Panc1 (cell line): ENCODE measurements at regions of chr22 and their contacts with region 1.

Region 1: GRCh38 chr22:40533712-40534378 is 102.7 kb downstream of the MRTFA start:
- DNase-seq: no peak
- ATAC-seq: peak; percentile 78
- H3K4me3 ChIP-seq: peak overlapping the region; percentile 33 to 45
- H3K27ac ChIP-seq: peak overlapping the region; percentile 94
- H3K4me1 ChIP-seq: peaks cover 43% of the 10 kb centered on the region
- H3K27me3 ChIP-seq: no peaks in the 10 kb centered on the region
- CTCF ChIP-seq: no peak

Region 2: GRCh38 chr22:40449676-40450035 is 84.2 kb before region 1 on chr22:
- CTCF ChIA-PET with region 1: interaction called, 11 read pairs
- POLR2A ChIA-PET with region 1: no interaction called
- in situ Hi-C with region 1: no loop called
- intact Hi-C with region 1: no loop called
- DNase-seq: no peak
- ATAC-seq: no peak
- H3K4me3 ChIP-seq: no peak overlapping the region
- H3K27ac ChIP-seq: no peak overlapping the region
- H3K4me1 ChIP-seq: peaks cover 9% of the 10 kb centered on the region
- H3K27me3 ChIP-seq: no peaks in the 10 kb centered on the region
- CTCF ChIP-seq: no peak

Region 3: GRCh38 chr22:40519284-40519947 is 14.4 kb before region 1 on chr22:
- CTCF ChIA-PET with region 1: no interaction called
- POLR2A ChIA-PET with region 1: no interaction called
- in situ Hi-C with region 1: no loop called
- intact Hi-C with region 1: no loop called
- DNase-seq: no peak
- ATAC-seq: no peak
- H3K4me3 ChIP-seq: no peak overlapping the region
- H3K27ac ChIP-seq: peak overlapping the region; percentile 39; the same call in 1 of the 2 replicates
- H3K4me1 ChIP-seq: peaks cover 12% of the 10 kb centered on the region
- H3K27me3 ChIP-seq: no peaks in the 10 kb centered on the region
- CTCF ChIP-seq: no peak

Region 4: GRCh38 chr22:40594924-40595323 is 61.1 kb after region 1 on chr22:
- CTCF ChIA-PET with region 1: interaction called, 16 read pairs
- POLR2A ChIA-PET with region 1: no interaction called
- in situ Hi-C with region 1: no loop called
- intact Hi-C with region 1: no loop called
- DNase-seq: no peak
- ATAC-seq: no peak
- H3K4me3 ChIP-seq: no peak overlapping the region
- H3K27ac ChIP-seq: no peak overlapping the region
- H3K4me1 ChIP-seq: peaks cover 30% of the 10 kb centered on the region
- H3K27me3 ChIP-seq: no peaks in the 10 kb centered on the region
- CTCF ChIP-seq: no peak

Region 5: DNA sequence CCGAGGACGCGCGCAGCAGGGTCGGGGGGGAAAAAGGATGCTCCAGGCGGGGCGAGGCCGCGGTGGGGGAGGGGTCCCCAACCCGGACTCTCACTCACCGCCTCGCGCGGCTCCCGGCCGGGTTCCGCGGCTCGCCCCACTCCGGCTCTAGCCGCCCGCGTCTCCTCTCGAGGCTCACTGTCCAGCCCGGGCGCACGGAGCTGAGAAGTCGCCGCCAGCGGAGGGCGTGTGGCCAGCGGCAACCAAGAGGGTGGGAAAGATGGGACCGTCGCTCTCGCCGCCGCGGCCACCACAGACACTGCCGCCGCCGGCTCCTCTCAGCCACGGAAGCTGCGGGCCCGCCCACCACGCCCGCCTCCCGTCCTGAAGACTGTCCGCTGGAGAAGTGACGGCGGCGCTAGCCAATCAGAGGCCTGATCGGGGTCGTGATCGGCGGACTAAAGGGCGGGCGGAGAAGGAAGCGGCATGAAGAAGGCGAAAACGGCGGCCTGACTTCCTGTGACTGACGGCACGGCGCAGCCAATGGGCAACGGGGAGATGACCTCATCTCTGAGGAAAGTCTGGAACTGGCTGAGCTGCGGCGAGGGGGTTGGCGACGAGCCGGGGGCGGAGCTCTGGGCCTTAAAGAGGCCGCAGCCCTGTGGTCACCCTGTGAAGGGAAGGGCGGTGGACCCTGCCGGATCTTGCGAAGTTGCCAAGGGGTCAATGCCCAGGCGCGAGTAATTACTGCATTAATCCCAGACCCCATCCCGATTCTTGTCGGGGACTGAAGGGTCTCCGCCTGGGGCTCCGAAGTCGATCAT is 102.7 kb after region 1 on chr22 and contains the start of gene MRTFA:
- CTCF ChIA-PET with region 1: interaction called, 4 read pairs
- POLR2A ChIA-PET with region 1: no interaction called
- in situ Hi-C with region 1: loop called (anchors 25 kb)
- intact Hi-C with region 1: no loop called
- DNase-seq: peak; percentile 94
- ATAC-seq: peak; percentile 96
- H3K4me3 ChIP-seq: peak within 1 kb of the TSS; percentile 70 to 90
- H3K27ac ChIP-seq: peak within 1 kb of the TSS; percentile 90
- H3K4me1 ChIP-seq: peaks cover 9% of the 10 kb centered on the region
- H3K27me3 ChIP-seq: no peaks in the 10 kb centered on the region
- CTCF ChIP-seq: no peak
- total RNA-seq, gene MRTFA: 62.1 TPM

Region 6: DNA sequence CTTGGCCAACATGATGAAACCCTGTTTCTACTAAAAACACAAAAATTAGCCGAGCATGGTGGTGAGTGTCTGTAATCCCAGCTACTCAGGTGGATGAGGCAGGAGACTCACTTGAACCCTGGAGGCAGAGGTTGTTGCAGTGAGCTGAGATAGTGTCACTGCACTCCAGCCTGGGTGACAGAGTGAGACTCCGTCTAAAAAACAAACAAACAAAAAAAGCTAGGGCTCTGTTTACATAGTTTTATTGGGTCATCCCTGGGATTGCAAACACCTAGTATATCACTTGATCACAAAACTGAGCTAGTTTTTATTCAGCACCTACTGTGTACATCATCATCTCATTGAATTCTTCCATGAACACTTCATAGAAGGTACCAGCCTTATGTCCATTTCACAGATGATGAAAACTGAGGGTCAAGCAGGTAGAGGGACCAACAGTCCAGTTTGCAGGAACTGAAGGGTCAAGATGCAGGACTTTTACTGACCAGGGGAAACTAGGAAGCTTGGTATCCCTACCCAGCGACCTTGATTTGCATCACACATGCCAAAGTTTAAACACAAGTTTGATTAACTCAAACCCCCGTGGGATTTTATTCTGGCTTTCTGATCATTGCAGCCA is 111.8 kb after region 1 on chr22:
- CTCF ChIA-PET with region 1: no interaction called
- POLR2A ChIA-PET with region 1: no interaction called
- in situ Hi-C with region 1: loop called (anchors 25 kb)
- intact Hi-C with region 1: loop called (anchors 2 kb)
- DNase-seq: no peak
- ATAC-seq: no peak
- H3K4me3 ChIP-seq: no peak overlapping the region
- H3K27ac ChIP-seq: peak overlapping the region; percentile 70
- H3K4me1 ChIP-seq: peaks cover 8% of the 10 kb centered on the region
- H3K27me3 ChIP-seq: no peaks in the 10 kb centered on the region
- CTCF ChIP-seq: no peak